ENCODE measurements at regions of chr16 and their contacts with region 1.

Region 1: GRCh38 chr16:22098405-22099255 is 6.3 kb downstream of the VWA3A start:
- DNase-seq: no peak
- ATAC-seq: peak; percentile 55 to 60

Region 2: DNA sequence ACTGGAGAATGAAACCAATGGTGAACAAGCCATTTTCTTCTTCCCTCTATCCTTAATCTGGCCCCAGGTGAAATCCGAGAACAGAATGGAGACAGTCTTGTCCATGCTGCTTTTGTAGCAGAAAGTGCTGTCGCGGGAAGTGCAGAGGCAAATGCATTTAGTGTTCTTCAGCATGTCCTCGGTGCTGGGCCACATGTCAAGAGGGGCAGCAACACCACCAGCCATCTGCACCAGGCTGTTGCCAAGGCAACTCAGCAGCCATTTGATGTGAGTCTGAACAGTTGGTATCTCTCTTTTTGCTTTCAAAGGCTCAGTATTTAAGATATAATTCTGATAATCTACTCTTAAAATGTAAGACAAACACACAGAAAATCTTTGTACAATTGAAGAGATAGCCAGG is 126.8 kb before region 1 on chr16:
- intact Hi-C with region 1: no loop called
- DNase-seq: no peak
- ATAC-seq: no peak

Region 3: DNA sequence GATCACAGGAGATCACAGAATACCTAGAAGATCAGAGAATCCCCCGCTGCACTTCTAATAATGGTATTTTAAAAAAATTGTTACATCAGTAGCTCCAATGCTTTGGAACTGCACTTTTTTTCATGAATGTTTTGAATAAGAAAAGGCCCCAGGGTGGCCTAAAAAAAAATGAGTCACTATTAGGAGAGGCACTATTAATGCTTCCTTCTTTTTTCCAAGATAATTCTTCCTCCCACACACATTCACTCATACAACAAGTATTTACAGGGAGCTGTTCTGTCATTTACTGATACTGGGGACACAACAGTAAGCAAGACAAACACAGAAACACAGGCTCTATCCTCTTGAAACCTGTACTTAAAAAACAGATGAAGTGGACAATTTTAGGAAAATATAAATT is 97.0 kb before region 1 on chr16:
- intact Hi-C with region 1: loop called (anchors 2 to 5 kb)
- DNase-seq: no peak
- ATAC-seq: peak in 1 of 2 donors; percentile 42

Region 4: DNA sequence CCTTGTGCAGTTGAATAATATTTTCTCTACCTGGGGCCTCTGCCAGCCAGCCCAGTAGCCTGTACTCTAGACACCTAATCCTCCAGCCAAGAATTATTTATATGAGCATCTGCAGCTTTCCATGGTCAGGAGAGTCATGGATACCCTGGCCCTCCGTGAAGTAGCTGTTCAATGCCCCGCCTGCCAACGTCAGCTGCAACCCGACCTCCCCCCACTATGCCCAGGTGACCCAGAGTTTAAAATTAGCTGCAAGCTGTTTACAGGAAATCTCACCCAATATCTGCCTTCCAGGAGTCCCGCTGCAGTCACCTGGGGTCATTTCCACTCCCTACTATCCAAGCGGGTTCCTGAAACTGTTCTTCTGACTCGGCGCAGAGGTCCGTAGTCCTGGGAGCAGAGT is 76.0 kb after region 1 on chr16:
- intact Hi-C with region 1: loop called in 1 of 2 experiments (anchors 10 kb)
- DNase-seq: no peak
- ATAC-seq: no peak

Measured in left cardiac atrium (tissue), 4 donors.